HCT116 (cell line): ENCODE measurements at regions of chr16 and their contacts with region 1.

Region 1: DNA sequence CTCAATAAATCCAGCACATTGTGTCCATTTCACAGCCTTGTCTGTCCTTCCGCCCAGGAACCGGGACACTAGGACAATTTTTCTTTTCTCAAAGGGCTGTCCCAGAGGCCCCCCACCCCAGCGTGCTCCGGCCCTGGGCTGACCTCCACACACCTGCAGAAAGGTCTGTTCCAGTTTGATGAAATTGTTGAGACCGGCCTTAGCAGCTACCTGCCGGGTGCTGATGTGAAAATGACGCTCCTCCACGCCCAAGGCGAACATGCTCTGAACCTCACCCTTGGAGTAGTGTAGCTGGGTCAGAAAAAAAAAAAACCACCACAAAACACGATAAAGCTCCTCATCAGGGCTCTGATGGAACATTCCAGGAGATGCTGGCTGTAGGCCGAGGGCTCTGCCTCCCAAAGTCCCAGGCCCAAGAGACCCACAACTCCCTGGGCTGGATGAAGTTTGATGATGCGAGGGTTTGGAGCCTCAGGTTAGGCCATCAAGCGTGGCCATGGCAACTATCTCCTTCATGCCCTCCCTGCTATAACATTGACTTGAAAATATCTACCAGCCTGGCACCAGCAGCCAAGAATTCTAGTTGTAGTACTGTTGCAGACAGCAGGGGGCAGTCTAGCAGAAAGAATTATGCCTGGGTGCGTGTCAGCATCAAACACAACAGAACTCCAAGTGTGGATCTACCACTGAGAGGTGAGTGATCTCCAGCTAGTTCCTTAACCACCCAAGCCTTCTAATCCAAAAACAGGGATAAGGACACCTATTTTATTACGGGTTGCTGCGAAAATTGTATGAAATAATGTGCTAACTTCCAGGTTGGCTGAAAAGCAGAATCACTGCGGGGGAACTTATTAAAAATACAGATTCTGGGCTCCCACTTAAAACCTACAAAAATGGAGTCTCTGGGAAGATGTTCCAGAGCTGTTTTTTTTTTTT is 62.1 kb downstream of the RMI2 start:
- DNase-seq: peak; percentile 68
- ATAC-seq: peak; percentile 78
- H3K4me3 ChIP-seq: no peak overlapping the region
- H3K27ac ChIP-seq: no peak overlapping the region
- H3K4me1 ChIP-seq: peaks cover 0 to 10% of the 10 kb centered on the region in 2 experiments; a peak in 2 of 4 replicates
- H3K27me3 ChIP-seq: no peaks in the 10 kb centered on the region
- CTCF ChIP-seq: peak; percentile 76 to 93 (median 79)
- POLR2A ChIP-seq: no peak
- RAD21 ChIP-seq: peak; percentile 97

Region 2: DNA sequence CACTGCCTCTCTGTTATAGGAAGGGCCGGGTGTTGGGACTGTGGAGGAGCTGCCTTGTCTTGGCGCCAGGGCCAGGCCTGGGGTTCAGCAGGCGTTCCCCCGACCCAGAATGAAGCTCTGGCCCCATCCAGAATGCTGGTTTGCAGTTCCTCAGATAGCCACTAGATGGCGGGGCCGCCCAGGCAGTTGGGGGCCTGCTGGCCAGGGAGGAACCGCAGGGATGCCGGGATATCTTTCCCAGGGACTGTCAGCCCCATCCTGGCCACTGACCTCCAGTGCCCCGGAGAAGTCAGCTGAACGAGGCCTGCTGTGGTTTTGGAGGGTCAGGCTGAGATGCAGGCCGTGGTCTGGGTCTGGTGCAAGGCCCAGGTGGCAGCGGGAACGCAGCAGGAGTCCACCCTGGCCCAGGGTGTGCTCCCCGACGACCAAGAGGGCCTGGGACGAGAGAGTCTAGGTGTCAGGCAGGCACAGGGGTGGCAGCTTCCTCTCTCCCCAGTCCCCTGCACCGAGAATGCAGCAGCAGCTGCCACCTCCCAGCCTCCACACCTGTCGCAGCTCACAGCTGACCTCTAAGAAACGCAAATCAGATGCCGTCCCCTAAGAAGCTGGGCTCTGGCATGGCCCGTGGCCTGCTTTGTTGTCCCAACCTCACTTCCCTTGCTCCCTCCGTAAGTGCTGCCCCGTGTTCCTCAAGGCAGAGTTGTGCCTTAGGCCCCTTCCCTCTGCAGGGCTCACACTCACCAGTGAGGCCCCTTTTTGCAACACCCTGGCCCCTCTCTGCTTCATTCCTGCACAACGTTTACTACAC is 10.9 kb before region 1 on chr16:
- CTCF ChIA-PET with region 1: interaction called, 18 read pairs
- POLR2A ChIA-PET with region 1: no interaction called
- RAD21 ChIA-PET with region 1: no interaction called
- intact Hi-C with region 1: no loop called
- DNase-seq: no peak
- ATAC-seq: peak; percentile 94
- H3K4me3 ChIP-seq: no peak overlapping the region
- H3K27ac ChIP-seq: no peak overlapping the region
- H3K4me1 ChIP-seq: 0 out of 4 replicates have a peak, but pooled peaks cover 0 to 6% of the 10 kb centered on the region in 2 experiments
- H3K27me3 ChIP-seq: no peaks in the 10 kb centered on the region
- CTCF ChIP-seq: peak; percentile 93 to 98 (median 98)
- POLR2A ChIP-seq: no peak
- RAD21 ChIP-seq: peak; percentile 99

Region 3: DNA sequence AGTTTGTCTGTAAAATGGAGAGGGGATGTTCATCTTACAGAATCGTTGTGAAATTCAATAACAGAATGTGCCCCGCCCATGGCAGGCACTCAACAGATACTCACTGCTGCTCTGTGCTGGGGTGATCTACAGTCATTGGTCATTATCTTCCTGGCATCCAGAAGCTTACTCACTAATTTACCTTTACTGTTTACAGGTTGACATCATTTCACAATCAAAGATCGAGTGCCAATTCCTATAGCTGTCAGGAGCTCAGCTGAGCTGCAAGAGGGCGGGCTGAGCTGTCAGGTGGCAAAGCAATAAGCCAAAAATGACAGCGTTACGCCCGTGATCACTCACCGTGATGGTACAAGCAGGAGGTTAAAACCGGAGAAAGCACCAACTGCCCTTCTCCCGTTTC is 128.2 kb after region 1 on chr16:
- CTCF ChIA-PET with region 1: interaction called, 16 read pairs
- POLR2A ChIA-PET with region 1: no interaction called
- RAD21 ChIA-PET with region 1: no interaction called
- intact Hi-C with region 1: loop called (anchors 2 kb)
- DNase-seq: no peak
- ATAC-seq: no peak
- H3K4me3 ChIP-seq: no peak overlapping the region
- H3K27ac ChIP-seq: no peak overlapping the region
- H3K4me1 ChIP-seq: peaks cover 4 to 5% of the 10 kb centered on the region in 2 experiments; a peak in 2 of 4 replicates
- H3K27me3 ChIP-seq: no peaks in the 10 kb centered on the region
- CTCF ChIP-seq: no peak
- POLR2A ChIP-seq: no peak
- RAD21 ChIP-seq: no peak

Region 4: DNA sequence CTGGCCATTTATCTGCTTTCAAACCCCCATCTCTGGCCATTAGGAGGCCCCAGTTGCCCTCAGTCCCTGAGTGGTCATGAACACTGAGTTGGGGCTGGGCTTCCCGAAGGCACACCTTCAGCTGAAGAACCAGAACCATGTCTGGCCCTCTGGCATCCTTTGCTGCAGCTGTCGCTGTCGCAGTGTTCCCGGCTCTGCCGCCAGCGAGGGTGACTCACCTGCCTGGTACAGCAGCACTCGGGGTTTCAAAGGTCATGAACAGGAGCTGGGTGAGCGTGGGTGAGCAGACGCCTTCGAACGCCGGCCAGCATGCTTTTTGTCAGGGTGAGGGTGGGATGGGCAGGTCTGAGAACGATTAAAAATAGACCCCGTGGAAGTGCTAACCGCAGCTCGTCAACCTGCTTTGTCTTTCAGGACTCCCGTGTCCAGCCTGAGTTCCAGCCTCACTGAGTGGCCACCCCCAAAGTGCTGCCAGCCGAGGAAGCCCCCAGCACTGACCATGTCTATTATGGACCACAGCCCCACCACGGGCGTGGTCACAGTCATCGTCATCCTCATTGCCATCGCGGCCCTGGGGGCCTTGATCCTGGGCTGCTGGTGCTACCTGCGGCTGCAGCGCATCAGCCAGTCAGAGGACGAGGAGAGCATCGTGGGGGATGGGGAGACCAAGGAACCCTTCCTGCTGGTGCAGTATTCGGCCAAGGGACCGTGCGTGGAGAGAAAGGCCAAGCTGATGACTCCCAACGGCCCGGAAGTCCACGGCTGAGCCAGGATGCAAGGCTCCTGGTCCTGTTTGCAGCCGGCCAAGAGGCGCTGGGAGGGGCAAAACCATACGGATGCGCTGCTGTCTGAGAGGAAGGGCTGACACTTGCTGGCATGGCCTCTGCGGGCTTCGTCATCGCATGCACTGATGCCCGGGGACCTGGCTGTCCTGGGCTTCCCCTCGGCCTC is 268.5 kb after region 1 on chr16:
- CTCF ChIA-PET with region 1: interaction called, 6 read pairs
- POLR2A ChIA-PET with region 1: no interaction called
- RAD21 ChIA-PET with region 1: interaction called in 1 of 2 experiments, 6 read pairs
- intact Hi-C with region 1: loop called (anchors 1 kb)
- DNase-seq: peak; percentile 72
- ATAC-seq: peak; percentile 88
- H3K4me3 ChIP-seq: peak overlapping the region in 1 of 2 experiments; percentile 14; a peak in 1 of 4 replicates
- H3K27ac ChIP-seq: peak overlapping the region; percentile 59
- H3K4me1 ChIP-seq: peaks cover 45 to 60% of the 10 kb centered on the region in 2 experiments
- H3K27me3 ChIP-seq: no peaks in the 10 kb centered on the region
- CTCF ChIP-seq: 0 out of 6 replicates have a peak, but pooled peaks of 1 of the 3 experiments have one; percentile 9
- POLR2A ChIP-seq: no peak
- RAD21 ChIP-seq: no peak; the same call in none of the 2 replicates

Region 5: DNA sequence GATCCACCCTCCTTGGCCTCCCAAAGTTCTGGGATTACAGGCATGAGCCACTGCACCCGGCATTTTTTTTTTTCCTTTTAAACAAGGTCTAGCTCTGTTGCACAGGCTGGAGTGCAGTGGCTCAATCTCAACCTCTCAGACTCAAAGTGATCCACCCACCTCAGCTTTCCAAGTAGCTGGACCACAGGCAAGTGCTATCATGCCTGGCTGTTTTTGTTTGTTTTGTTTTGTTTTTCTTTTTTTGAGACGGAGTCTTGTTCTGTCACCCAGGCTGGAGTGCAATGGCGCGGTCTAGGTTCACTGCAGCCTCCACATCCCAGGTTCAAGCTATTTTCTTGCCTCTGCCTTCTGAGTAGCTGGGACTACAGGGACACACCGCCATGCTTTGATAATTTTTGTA is 408.8 kb after region 1 on chr16:
- CTCF ChIA-PET with region 1: interaction called, 9 read pairs
- POLR2A ChIA-PET with region 1: no interaction called
- RAD21 ChIA-PET with region 1: no interaction called
- intact Hi-C with region 1: loop called (anchors 1 kb)
- DNase-seq: no peak
- ATAC-seq: no peak
- H3K4me3 ChIP-seq: no peak overlapping the region
- H3K27ac ChIP-seq: no peak overlapping the region
- H3K4me1 ChIP-seq: peaks cover 2 to 4% of the 10 kb centered on the region in 2 experiments; a peak in 1 of 4 replicates
- H3K27me3 ChIP-seq: no peaks in the 10 kb centered on the region
- CTCF ChIP-seq: no peak
- POLR2A ChIP-seq: no peak
- RAD21 ChIP-seq: no peak